ENCODE measurements at regions of chr14 and their contacts with region 1.

Region 1: DNA sequence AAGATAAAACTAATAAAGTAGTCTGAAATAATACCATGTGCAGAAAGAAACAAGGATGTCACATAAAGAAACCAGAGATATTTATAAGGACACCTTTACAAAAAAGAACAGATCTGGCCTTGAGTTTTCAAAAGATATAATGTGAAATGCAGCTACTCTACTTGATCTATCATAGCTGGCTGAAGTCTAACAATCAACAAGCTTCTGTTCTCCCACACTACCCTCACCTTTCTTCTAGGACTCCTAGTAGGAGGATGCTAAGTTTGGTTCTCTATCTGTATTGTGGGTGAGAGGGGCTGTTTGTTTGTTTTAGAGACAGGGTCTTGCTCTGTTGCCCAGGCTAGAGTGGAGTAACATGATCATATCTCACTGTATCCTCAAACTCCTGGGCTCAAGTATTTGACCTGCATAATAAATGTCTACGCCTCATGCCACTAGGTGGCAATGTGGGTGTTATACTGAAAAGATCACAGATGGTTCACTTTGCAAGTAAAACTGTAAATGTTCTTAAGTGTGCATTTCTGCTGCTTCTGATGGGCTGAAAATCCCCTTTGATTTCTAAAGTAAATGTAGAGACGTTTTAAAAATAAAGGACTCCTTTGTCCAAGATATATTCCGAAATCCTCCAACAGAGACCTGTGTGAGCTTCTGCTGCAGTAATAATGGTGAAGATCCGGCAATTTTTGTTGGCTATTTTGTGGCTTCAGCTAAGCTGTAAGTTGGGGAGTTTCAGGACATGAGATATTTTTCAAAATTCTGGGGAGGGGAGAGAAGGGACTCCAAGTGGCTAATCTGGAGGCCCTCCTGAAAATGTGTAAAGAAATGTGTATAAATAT is 269.3 kb downstream of the DAD1 start:
- DNase-seq: peak; percentile 40 to 48
- H3K4me3 ChIP-seq: no peak overlapping the region
- H3K27ac ChIP-seq: no peak overlapping the region
- H3K4me1 ChIP-seq: no peaks in the 10 kb centered on the region
- H3K27me3 ChIP-seq: no peaks in the 10 kb centered on the region
- CTCF ChIP-seq: peak; percentile 76

Region 2: GRCh38 chr14:22112004-22112403 is 207.7 kb before region 1 on chr14:
- CTCF ChIA-PET with region 1: no interaction called
- POLR2A ChIA-PET with region 1: no interaction called
- intact Hi-C with region 1: loop called (anchors 5 kb)
- DNase-seq: peak in 1 of 2 experiments; percentile 11
- H3K4me3 ChIP-seq: no peak overlapping the region
- H3K27ac ChIP-seq: no peak overlapping the region
- H3K4me1 ChIP-seq: no peaks in the 10 kb centered on the region
- H3K27me3 ChIP-seq: no peaks in the 10 kb centered on the region
- CTCF ChIP-seq: peak; percentile 63

Region 3: GRCh38 chr14:22221508-22221907 is 98.2 kb before region 1 on chr14:
- CTCF ChIA-PET with region 1: interaction called, 4 read pairs
- POLR2A ChIA-PET with region 1: no interaction called
- intact Hi-C with region 1: loop called (anchors 5 kb)
- DNase-seq: no peak
- H3K4me3 ChIP-seq: no peak overlapping the region
- H3K27ac ChIP-seq: no peak overlapping the region
- H3K4me1 ChIP-seq: peaks cover 18% of the 10 kb centered on the region
- H3K27me3 ChIP-seq: no peaks in the 10 kb centered on the region
- CTCF ChIP-seq: peak; percentile 48; the same call in 1 of the 2 replicates

Region 4: GRCh38 chr14:22296722-22297121 is 23.0 kb before region 1 on chr14:
- CTCF ChIA-PET with region 1: no interaction called
- POLR2A ChIA-PET with region 1: no interaction called
- intact Hi-C with region 1: no loop called
- DNase-seq: peak in 1 of 2 experiments; percentile 84
- H3K4me3 ChIP-seq: 0 out of 2 replicates have a peak overlapping the region, but pooled peaks have one; percentile 26
- H3K27ac ChIP-seq: peak overlapping the region; percentile 49
- H3K4me1 ChIP-seq: peaks cover 30% of the 10 kb centered on the region
- H3K27me3 ChIP-seq: no peaks in the 10 kb centered on the region
- CTCF ChIP-seq: no peak

Region 5: GRCh38 chr14:22333422-22334276 is 13.9 kb after region 1 on chr14:
- CTCF ChIA-PET with region 1: no interaction called
- POLR2A ChIA-PET with region 1: no interaction called
- intact Hi-C with region 1: no loop called
- DNase-seq: peak in 1 of 2 experiments; percentile 87
- H3K4me3 ChIP-seq: no peak overlapping the region
- H3K27ac ChIP-seq: peak overlapping the region; percentile 31; the same call in 1 of the 2 replicates
- H3K4me1 ChIP-seq: peaks cover 25% of the 10 kb centered on the region
- H3K27me3 ChIP-seq: no peaks in the 10 kb centered on the region
- CTCF ChIP-seq: no peak